Dendritic cell treated with granulocyte-macrophage colony-stimulating factor and Interleukin-4, amounts not matched to agents 40 ng/mL and 50 ng/mL, for 4 days (primary cell): ENCODE measurements at regions of chr1 and their contacts with region 1.

Region 1: GRCh38 chr1:200488375-200489165 is 78.7 kb upstream of the ZNF281 start:
- H3K4me3 Mint-ChIP-seq: no peak overlapping the region
- H3K27ac Mint-ChIP-seq: no peak overlapping the region
- H3K4me1 Mint-ChIP-seq: peaks cover 10% of the 10 kb centered on the region
- H3K27me3 Mint-ChIP-seq: peaks cover 4% of the 10 kb centered on the region

Region 2: DNA sequence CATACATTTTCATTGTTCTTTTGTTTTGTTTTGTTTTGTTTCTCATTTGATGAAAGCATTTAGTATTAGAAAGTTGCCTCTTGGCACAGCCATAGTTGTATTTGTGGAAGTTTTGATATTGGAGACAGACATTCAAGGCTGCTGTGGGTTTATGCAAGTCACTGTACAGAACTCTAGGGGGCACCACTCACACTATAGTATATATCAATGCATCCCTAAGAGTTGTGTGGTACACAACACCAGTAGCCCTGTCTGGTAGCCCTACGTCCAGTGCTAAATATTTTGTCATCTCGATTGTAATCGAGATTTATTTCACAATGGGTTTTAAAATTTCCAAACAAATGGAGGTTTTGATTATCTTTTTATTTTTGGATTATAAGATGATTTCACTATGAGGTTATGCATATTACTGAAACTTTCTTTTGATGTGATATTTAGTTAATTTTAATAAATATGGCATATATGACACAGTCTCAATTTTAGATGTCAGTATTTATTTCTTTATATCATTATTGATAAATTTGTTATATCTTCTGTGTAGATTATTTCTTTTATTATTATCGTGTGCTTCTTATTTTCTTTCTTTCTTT is 348.8 kb before region 1 on chr1:
- intact Hi-C with region 1: loop called (anchors 1 kb)
- H3K4me3 Mint-ChIP-seq: no peak overlapping the region
- H3K27ac Mint-ChIP-seq: no peak overlapping the region
- H3K4me1 Mint-ChIP-seq: peaks cover 5% of the 10 kb centered on the region
- H3K27me3 Mint-ChIP-seq: no peaks in the 10 kb centered on the region

Region 3: DNA sequence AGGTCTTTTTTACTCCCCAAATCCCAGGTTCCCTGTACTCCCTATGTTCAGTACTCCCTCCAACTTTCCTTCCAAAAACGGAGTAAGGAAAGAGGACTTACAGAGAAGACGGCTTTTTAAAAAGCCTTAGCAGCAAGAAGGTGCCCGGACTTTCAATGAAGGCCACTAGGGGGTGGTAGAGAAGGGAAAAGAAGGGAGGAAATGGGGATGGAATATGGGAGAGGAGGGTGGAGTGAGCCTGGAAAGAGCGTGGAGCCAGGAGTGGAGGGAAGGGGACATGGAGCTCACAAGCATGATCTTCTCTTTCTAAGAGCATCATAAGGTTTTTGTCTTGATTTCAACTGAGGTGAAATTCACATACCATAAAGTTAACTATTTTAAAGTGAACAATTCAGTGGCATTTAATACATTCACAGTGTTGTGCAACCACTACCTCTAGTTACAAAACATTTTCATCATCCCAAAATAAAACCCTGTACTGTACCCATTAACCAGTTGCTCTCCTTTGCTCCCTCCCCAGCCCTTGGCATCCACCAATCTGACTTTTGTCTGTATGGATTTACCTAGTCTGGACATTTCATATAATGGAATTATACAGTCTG is 208.7 kb before region 1 on chr1:
- intact Hi-C with region 1: loop called (anchors 1 kb)
- H3K4me3 Mint-ChIP-seq: no peak overlapping the region
- H3K27ac Mint-ChIP-seq: no peak overlapping the region
- H3K4me1 Mint-ChIP-seq: peaks cover 16% of the 10 kb centered on the region
- H3K27me3 Mint-ChIP-seq: no peaks in the 10 kb centered on the region

Region 4: DNA sequence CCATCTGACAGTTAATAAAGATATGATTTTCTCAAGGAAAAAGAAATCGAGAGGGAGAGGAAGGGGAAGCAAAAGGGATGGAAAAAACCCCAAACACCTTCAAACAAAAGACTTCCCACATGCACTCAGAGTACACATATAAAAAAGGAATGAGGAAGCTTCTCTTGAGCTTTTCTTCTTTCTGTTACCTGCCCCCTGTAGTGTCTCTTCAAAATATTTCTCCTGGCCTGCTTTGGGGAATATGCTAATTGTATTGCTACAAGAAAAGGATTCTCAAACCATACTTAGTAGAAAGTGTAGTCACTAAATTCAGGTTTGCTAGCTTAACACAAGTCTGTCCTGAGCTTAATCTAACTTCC is 73.3 kb after region 1 on chr1:
- intact Hi-C with region 1: no loop called
- H3K4me3 Mint-ChIP-seq: no peak overlapping the region
- H3K27ac Mint-ChIP-seq: no peak overlapping the region
- H3K4me1 Mint-ChIP-seq: no peaks in the 10 kb centered on the region
- H3K27me3 Mint-ChIP-seq: no peaks in the 10 kb centered on the region

Region 5: DNA sequence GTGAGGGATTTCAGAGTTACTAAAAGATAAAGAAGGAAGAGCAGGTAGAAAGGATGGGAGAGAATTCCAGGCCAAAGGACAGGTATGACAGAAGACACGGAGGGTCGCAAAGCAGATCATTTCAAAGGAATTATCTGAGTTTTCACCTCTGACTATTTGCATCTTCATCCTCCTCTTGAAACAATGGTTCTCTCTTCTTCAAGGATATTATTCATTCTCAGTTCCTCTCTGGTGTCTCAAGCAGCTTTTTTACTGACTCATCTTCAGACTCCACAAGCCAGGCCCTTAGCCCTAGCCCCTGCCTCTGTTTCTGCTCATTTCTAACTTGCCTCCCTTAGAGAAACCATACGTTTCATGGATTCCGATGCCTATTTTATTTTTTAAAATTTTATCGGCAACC is 166.1 kb after region 1 on chr1:
- intact Hi-C with region 1: no loop called
- H3K4me3 Mint-ChIP-seq: no peak overlapping the region
- H3K27ac Mint-ChIP-seq: peak overlapping the region; percentile 69
- H3K4me1 Mint-ChIP-seq: peaks cover 45% of the 10 kb centered on the region
- H3K27me3 Mint-ChIP-seq: no peaks in the 10 kb centered on the region